ENCODE measurements at regions of chr14 and their contacts with region 1.

Region 1: DNA sequence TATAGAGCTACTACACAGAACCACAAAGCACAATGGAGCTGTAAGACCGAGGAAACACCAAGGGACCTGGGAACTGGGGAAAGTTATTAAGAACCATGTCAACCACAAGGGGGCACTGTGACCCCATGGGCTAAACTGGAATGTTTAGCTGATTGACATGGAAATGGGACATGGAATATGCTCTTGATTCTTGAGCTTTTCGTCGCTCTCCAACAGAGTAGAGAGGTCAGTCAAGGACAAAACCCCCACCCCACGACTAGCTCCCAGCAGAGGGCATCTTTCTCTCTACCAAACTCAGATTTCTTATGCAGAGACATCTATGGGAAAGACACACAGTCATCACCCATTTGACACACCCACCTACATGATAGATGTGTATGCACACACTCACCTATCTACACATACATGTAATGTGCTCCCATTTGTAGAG is 10.1 kb downstream of the NDRG2 start:
- DNase-seq: peak; percentile 86
- ATAC-seq: peak; percentile 83
- H3K4me3 ChIP-seq: no peak overlapping the region
- H3K4me3 Mint-ChIP-seq: no peak overlapping the region
- H3K27ac ChIP-seq: no peak overlapping the region
- H3K27ac Mint-ChIP-seq: no peak overlapping the region
- H3K4me1 ChIP-seq: no peaks in the 10 kb centered on the region
- H3K4me1 Mint-ChIP-seq: no peaks in the 10 kb centered on the region
- H3K27me3 ChIP-seq: peaks cover 0 to 11% (median 2%) of the 10 kb centered on the region in 4 experiments
- H3K27me3 Mint-ChIP-seq: peaks cover 35% of the 10 kb centered on the region
- CTCF ChIP-seq: peak; percentile 92

Region 2: GRCh38 chr14:20970983-20971704 is 43.6 kb before region 1 on chr14:
- CTCF ChIA-PET with region 1: interaction called, 16 read pairs
- POLR2A ChIA-PET with region 1: no interaction called
- intact Hi-C with region 1: no loop called
- DNase-seq: peak; percentile 89
- ATAC-seq: peak; percentile 96
- H3K4me3 ChIP-seq: peak overlapping the region; percentile 62 to 76 (median 68)
- H3K4me3 Mint-ChIP-seq: peak overlapping the region; percentile 96
- H3K27ac ChIP-seq: no peak overlapping the region
- H3K27ac Mint-ChIP-seq: peak overlapping the region; percentile 73
- H3K4me1 ChIP-seq: peaks cover 8 to 14% of the 10 kb centered on the region in 2 donors
- H3K4me1 Mint-ChIP-seq: peaks cover 11% of the 10 kb centered on the region
- H3K27me3 ChIP-seq: peaks cover 0 to 43% (median 10%) of the 10 kb centered on the region in 4 experiments
- H3K27me3 Mint-ChIP-seq: peaks cover 63% of the 10 kb centered on the region
- CTCF ChIP-seq: peak; percentile 94

Region 3: GRCh38 chr14:21003788-21004346 is 10.9 kb before region 1 on chr14:
- CTCF ChIA-PET with region 1: interaction called, 47 read pairs
- POLR2A ChIA-PET with region 1: no interaction called
- intact Hi-C with region 1: no loop called
- DNase-seq: no peak
- ATAC-seq: no peak
- H3K4me3 ChIP-seq: no peak overlapping the region
- H3K4me3 Mint-ChIP-seq: no peak overlapping the region
- H3K27ac ChIP-seq: no peak overlapping the region
- H3K27ac Mint-ChIP-seq: no peak overlapping the region
- H3K4me1 ChIP-seq: no peaks in the 10 kb centered on the region
- H3K4me1 Mint-ChIP-seq: no peaks in the 10 kb centered on the region
- H3K27me3 ChIP-seq: no peaks in the 10 kb centered on the region
- H3K27me3 Mint-ChIP-seq: no peaks in the 10 kb centered on the region
- CTCF ChIP-seq: no peak

Region 4: GRCh38 chr14:21032326-21033132 is 17.8 kb after region 1 on chr14:
- CTCF ChIA-PET with region 1: interaction called, 87 read pairs
- POLR2A ChIA-PET with region 1: no interaction called
- intact Hi-C with region 1: no loop called
- DNase-seq: no peak
- ATAC-seq: no peak
- H3K4me3 ChIP-seq: no peak overlapping the region
- H3K4me3 Mint-ChIP-seq: no peak overlapping the region
- H3K27ac ChIP-seq: no peak overlapping the region
- H3K27ac Mint-ChIP-seq: no peak overlapping the region
- H3K4me1 ChIP-seq: no peaks in the 10 kb centered on the region
- H3K4me1 Mint-ChIP-seq: no peaks in the 10 kb centered on the region
- H3K27me3 ChIP-seq: peaks cover 0 to 15% (median 0%) of the 10 kb centered on the region in 4 experiments
- H3K27me3 Mint-ChIP-seq: peaks cover 23% of the 10 kb centered on the region
- CTCF ChIP-seq: no peak

Region 5: DNA sequence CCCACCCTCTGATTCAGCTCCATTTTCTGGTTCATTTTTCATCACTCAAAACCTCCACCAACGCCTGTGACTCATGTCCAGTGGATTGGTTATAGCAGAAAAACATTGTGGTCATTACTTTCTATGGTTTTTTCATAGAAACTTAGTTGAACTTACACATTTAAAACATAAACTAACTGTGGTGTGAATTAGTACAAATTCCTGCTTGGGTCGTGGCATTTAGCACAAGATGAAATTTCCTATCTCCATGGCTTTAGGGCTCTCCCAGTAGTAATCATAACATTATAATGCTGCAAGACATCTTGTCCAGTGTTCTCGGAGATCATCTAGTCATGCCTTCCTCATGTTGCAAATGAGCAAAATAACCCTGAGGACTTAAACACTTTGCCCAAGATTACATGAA is 34.5 kb after region 1 on chr14:
- CTCF ChIA-PET with region 1: interaction called, 305 read pairs
- POLR2A ChIA-PET with region 1: no interaction called
- intact Hi-C with region 1: no loop called
- DNase-seq: no peak
- ATAC-seq: no peak
- H3K4me3 ChIP-seq: no peak overlapping the region
- H3K4me3 Mint-ChIP-seq: no peak overlapping the region
- H3K27ac ChIP-seq: no peak overlapping the region
- H3K27ac Mint-ChIP-seq: no peak overlapping the region
- H3K4me1 ChIP-seq: no peaks in the 10 kb centered on the region
- H3K4me1 Mint-ChIP-seq: no peaks in the 10 kb centered on the region
- H3K27me3 ChIP-seq: peaks cover 0 to 15% (median 3%) of the 10 kb centered on the region in 4 experiments
- H3K27me3 Mint-ChIP-seq: peaks cover 55% of the 10 kb centered on the region
- CTCF ChIP-seq: no peak

Region 6: DNA sequence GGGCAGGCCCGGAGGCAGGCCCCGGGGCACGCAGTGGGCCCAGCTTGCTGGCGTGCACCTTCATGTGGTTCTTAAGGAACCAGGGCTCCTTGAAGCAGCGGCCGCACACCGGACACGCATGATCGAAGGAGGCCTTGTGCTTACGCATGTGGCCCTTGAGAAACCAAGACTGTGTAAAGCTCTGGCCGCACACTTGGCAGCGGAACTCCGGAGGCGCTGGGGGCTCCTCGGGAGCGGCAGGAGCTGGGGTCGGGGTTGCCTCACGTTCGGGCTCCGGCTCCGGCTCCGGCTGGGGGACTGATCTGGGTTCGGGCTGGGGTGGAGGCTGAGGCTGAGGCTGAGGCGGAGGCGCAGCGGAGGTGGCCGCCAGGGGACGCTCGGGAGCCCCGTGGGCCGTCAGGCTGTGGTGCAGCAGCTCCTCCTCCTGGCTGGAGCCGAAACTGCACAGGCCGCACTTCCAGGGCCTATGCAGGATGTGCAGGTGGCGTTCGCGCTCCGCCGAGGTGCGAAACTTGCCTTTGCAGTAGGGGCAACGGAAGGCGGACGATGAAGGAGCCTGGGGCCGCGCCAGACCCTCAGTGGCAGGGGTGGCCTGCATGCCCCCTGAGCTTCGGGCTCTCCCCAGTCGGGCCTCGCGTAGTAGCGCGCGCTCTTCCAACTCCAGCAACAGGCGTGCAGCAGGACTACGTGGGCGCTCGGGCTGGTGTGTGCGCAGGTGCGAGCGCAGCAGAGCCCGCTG is 77.7 kb after region 1 on chr14:
- CTCF ChIA-PET with region 1: interaction called, 171 read pairs
- POLR2A ChIA-PET with region 1: no interaction called
- intact Hi-C with region 1: loop called (anchors 1 kb)
- DNase-seq: peak; percentile 93
- ATAC-seq: peak; percentile 99
- H3K4me3 ChIP-seq: no peak overlapping the region
- H3K4me3 Mint-ChIP-seq: peak overlapping the region; percentile 27
- H3K27ac ChIP-seq: no peak overlapping the region
- H3K27ac Mint-ChIP-seq: peak overlapping the region; percentile 72
- H3K4me1 ChIP-seq: peaks cover 6 to 16% of the 10 kb centered on the region in 2 donors
- H3K4me1 Mint-ChIP-seq: peaks cover 14% of the 10 kb centered on the region
- H3K27me3 ChIP-seq: peaks cover 0 to 4% (median 0%) of the 10 kb centered on the region in 4 experiments
- H3K27me3 Mint-ChIP-seq: no peaks in the 10 kb centered on the region
- CTCF ChIP-seq: peak; percentile 100

Region 7: GRCh38 chr14:21136024-21136423 is 121.2 kb after region 1 on chr14:
- CTCF ChIA-PET with region 1: interaction called, 19 read pairs
- POLR2A ChIA-PET with region 1: no interaction called
- intact Hi-C with region 1: no loop called
- DNase-seq: peak; percentile 26
- ATAC-seq: no peak
- H3K4me3 ChIP-seq: no peak overlapping the region
- H3K4me3 Mint-ChIP-seq: no peak overlapping the region
- H3K27ac ChIP-seq: no peak overlapping the region
- H3K27ac Mint-ChIP-seq: no peak overlapping the region
- H3K4me1 ChIP-seq: no peaks in the 10 kb centered on the region
- H3K4me1 Mint-ChIP-seq: no peaks in the 10 kb centered on the region
- H3K27me3 ChIP-seq: no peaks in the 10 kb centered on the region
- H3K27me3 Mint-ChIP-seq: peaks cover 16% of the 10 kb centered on the region
- CTCF ChIP-seq: peak; percentile 86

Region 8: GRCh38 chr14:21149641-21150367 is 135.0 kb after region 1 on chr14:
- CTCF ChIA-PET with region 1: no interaction called
- POLR2A ChIA-PET with region 1: no interaction called
- intact Hi-C with region 1: no loop called
- DNase-seq: no peak
- ATAC-seq: no peak
- H3K4me3 ChIP-seq: no peak overlapping the region
- H3K4me3 Mint-ChIP-seq: no peak overlapping the region
- H3K27ac ChIP-seq: no peak overlapping the region
- H3K27ac Mint-ChIP-seq: no peak overlapping the region
- H3K4me1 ChIP-seq: no peaks in the 10 kb centered on the region
- H3K4me1 Mint-ChIP-seq: no peaks in the 10 kb centered on the region
- H3K27me3 ChIP-seq: no peaks in the 10 kb centered on the region
- H3K27me3 Mint-ChIP-seq: peaks cover 25% of the 10 kb centered on the region
- CTCF ChIP-seq: no peak